Activated naive CD4-positive, alpha-beta T cell treated with anti-CD3 and anti-CD28 coated beads for 36 hours (primary cell): ENCODE measurements at regions of chr6 and their contacts with region 1.

Region 1: DNA sequence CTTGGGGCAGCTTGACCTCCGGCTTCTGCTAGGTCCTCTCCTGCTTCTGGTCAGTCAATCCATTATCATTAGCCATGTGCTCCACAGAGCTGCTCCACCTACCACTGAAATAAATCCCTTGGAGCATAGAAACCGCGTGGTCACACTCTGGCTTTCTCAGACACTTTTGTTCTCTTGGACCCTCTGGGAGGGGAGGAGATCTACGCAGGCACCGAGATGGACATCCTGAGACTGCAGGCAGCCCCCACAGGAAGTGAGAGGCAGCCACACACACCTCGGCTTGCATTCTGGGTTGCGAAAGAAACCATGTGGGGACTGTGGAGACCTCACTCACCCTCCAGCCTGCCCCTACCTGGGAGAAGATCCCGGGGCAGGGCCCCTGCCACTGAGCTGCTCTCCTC is 79.5 kb downstream of the FYN start:
- DNase-seq: peak; percentile 60
- H3K4me3 Mint-ChIP-seq: peak overlapping the region; percentile 42
- H3K27ac Mint-ChIP-seq: peak overlapping the region; percentile 88
- H3K4me1 Mint-ChIP-seq: peaks cover 75% of the 10 kb centered on the region
- H3K27me3 Mint-ChIP-seq: no peaks in the 10 kb centered on the region

Region 2: GRCh38 chr6:111515259-111515658 is 278.5 kb before region 1 on chr6:
- CTCF ChIA-PET with region 1: no interaction called
- intact Hi-C with region 1: no loop called
- DNase-seq: no peak
- H3K4me3 Mint-ChIP-seq: no peak overlapping the region
- H3K27ac Mint-ChIP-seq: no peak overlapping the region
- H3K4me1 Mint-ChIP-seq: no peaks in the 10 kb centered on the region
- H3K27me3 Mint-ChIP-seq: no peaks in the 10 kb centered on the region

Region 3: DNA sequence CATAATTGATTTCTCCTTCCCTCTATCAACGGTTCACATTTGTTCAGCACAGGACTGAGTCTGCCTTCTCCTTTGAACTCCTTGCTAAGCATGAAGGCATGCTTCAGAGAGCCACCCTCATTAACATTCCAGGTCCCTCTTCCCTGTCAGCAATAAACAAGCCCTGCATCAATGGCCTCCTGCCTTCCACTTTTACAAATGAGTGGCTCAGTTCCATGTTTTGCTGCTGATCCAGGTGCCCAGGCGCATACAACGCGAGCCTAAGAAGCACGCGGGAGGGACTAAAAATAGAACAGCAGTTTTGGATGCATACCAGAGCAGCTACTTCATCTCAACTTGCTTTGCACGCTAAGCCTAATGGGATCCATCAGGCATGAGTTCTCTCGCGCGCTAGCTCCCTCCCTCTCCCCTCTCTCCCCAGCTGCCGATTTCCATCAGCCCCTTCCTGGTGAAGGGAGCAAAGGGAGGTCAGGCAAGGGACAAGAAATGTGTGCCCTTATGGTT is 241.4 kb before region 1 on chr6:
- CTCF ChIA-PET with region 1: no interaction called
- intact Hi-C with region 1: no loop called
- DNase-seq: no peak
- H3K4me3 Mint-ChIP-seq: no peak overlapping the region
- H3K27ac Mint-ChIP-seq: no peak overlapping the region
- H3K4me1 Mint-ChIP-seq: no peaks in the 10 kb centered on the region
- H3K27me3 Mint-ChIP-seq: no peaks in the 10 kb centered on the region

Region 4: DNA sequence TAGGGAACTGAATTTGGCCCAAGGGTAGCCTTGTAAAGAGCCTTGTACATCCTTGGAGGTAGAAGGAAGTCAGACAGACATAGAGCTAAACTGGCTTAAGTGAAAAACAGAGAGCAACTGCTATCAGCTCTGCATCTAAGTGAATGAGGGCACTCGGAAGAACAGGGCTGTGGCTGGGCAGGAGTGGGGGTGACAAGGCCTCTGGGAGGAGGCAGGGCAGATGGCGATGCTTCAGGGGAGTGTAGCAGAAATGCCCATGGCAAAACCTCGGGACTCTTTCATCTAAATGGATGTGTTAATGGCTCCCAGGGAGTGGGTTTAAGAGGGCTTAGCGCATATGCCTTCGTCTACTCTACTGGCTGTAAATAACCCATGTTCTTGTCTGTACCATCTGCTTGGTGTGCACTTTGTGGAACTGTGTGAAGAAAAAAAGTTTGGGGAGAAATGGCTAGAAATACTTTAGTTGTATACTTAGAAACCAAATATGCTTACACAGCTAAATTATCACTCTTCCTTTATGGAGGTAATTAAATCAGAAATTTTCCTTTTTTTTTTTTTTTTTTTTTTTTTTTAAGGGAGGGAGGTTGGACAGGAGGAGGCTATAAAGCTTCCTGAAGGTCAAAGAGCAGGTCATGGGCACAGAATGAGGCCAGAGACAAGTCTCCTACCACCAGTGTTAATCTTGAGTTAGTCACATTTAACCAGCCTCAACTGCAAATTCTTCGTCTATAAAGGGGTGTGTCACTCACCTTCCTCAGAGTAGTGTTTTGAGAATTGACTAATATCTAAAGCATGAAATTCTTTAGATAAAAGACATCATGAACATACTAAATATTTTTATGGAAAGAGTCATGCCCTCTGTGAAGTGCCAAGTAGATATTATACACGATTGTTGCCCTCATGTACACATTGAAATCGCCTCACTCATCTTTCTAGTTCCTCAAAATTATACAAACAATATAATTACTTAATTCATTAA is 18.6 kb after region 1 on chr6:
- CTCF ChIA-PET with region 1: interaction called, 3 read pairs
- intact Hi-C with region 1: loop called (anchors 2 kb)
- DNase-seq: no peak
- H3K4me3 Mint-ChIP-seq: no peak overlapping the region
- H3K27ac Mint-ChIP-seq: peak overlapping the region; percentile 93
- H3K4me1 Mint-ChIP-seq: peaks cover 82% of the 10 kb centered on the region
- H3K27me3 Mint-ChIP-seq: no peaks in the 10 kb centered on the region